Vagina (tissue), 2 donors: ENCODE measurements at regions of chr10 and their contacts with region 1.

Region 1: DNA sequence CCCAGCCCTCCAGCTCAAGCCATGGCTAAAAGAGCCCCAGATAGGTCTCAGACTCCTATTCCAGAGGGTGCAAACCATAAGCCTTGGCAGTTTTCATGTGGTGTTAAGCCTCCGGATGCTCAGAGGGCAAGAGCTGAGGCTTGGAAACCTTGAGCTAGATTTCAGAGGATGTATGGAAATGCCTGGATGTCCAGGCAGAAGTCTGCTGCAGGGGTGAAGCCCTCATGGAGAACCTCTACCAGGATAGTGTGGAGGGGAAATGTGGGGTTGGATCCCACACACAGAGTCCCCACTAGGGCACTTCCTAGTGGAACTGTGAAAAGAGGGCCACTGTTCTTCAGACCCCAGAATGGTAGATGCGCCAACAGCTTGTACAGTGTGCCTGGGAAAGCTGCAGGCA is 13.2 kb upstream of the HPSE2 start:
- DNase-seq: no peak
- H3K4me3 ChIP-seq: no peak overlapping the region
- H3K27ac ChIP-seq: no peak overlapping the region
- H3K4me1 ChIP-seq: no peaks in the 10 kb centered on the region
- H3K27me3 ChIP-seq: no peaks in the 10 kb centered on the region
- CTCF ChIP-seq: no peak
- POLR2A ChIP-seq: no peak

Region 2: GRCh38 chr10:98467506-98468346 is 781.1 kb before region 1 on chr10:
- intact Hi-C with region 1: loop called (anchors 10 kb)
- DNase-seq: no peak
- H3K4me3 ChIP-seq: peak overlapping the region; percentile 41 to 55
- H3K27ac ChIP-seq: peak overlapping the region; percentile 41
- H3K4me1 ChIP-seq: peaks cover 27% of the 10 kb centered on the region
- H3K27me3 ChIP-seq: no peaks in the 10 kb centered on the region
- CTCF ChIP-seq: peak; percentile 66 to 76 (median 69)
- POLR2A ChIP-seq: no peak

Region 3: GRCh38 chr10:99506416-99506815 is 257.6 kb after region 1 on chr10:
- intact Hi-C with region 1: no loop called
- DNase-seq: no peak
- H3K4me3 ChIP-seq: no peak overlapping the region
- H3K27ac ChIP-seq: no peak overlapping the region
- H3K4me1 ChIP-seq: no peaks in the 10 kb centered on the region
- H3K27me3 ChIP-seq: no peaks in the 10 kb centered on the region
- CTCF ChIP-seq: no peak
- POLR2A ChIP-seq: no peak